Sigmoid colon (tissue), 7 donors: ENCODE measurements at regions of chrX and their contacts with region 1.

Region 1: GRCh38 chrX:48597353-48598264 is at the start of gene WDR13:
- DNase-seq: peak; percentile 95
- H3K4me3 ChIP-seq: peak within 1 kb of the TSS; percentile 51 to 71 (median 64)
- H3K27ac ChIP-seq: peak within 1 kb of the TSS; percentile 92 to 97 (median 94)
- H3K4me1 ChIP-seq: peaks cover 0 to 10% (median 6%) of the 10 kb centered on the region in 4 donors
- H3K27me3 ChIP-seq: no peaks in the 10 kb centered on the region
- CTCF ChIP-seq: no peak
- EP300 ChIP-seq: no peak
- POLR2A ChIP-seq: peak; percentile 15 to 46
- total RNA-seq, gene WDR13: 99.9 to 132 (median 106) TPM

Region 2: GRCh38 chrX:48574270-48575266 is 23.0 kb before region 1 on chrX and contains the start of gene RBM3:
- intact Hi-C with region 1: loop called (anchors 2 kb)
- DNase-seq: peak; percentile 97
- H3K4me3 ChIP-seq: peak within 1 kb of the TSS; percentile 54 to 76 (median 73)
- H3K27ac ChIP-seq: peak within 1 kb of the TSS; percentile 95 to 99 (median 96)
- H3K4me1 ChIP-seq: peaks cover 0 to 15% (median 14%) of the 10 kb centered on the region in 4 donors
- H3K27me3 ChIP-seq: no peaks in the 10 kb centered on the region
- CTCF ChIP-seq: peak in 3 of 4 experiments; percentile 26 to 29 (median 26)
- EP300 ChIP-seq: no peak
- POLR2A ChIP-seq: peak; percentile 88 to 93
- total RNA-seq, gene RBM3: 83.9 to 209 (median 143) TPM

Region 3: DNA sequence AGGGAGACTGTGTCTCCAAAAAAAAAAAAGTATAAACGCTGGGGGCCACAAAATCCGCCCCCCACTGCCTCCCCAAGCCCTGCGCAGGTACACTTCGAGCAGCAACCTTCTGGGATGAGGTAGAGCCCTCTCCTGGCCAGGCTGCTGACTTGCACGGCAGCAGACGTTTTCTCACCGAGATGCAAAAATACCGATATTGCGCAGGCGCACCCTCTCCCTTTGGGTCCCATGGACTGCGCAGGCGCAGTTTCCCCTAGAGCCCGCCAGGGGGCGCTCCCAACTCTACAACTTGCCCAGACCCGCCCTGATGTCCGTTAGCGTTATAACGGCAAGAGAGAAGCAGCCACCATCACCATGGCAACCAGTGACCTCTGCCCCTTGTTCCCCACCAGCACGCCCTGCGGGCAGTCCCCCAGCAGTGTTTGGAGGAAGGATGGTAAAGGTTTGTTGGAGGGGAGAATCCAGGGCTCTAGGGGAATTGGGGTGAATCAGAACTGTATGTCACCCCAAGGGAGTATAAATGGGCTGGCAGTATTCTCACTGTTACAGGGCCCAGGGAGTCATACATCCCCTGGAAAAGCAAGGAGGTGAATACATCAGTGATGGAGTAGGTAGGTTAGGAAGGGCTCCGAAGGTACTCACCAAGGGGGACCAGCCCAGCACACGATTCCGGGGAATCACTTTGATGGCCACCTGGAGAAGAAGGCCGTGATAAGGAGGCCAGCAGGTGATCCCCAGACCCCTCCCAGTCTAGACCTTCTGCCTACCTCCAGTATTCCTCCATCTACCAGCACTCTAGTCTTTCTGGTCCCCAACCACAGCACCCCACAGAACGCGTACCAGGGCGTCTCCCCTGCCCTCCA is 319.8 kb after region 1 on chrX:
- intact Hi-C with region 1: loop called (anchors 5 kb)
- DNase-seq: peak; percentile 95
- H3K4me3 ChIP-seq: peak overlapping the region in 2 of 4 donors; percentile 8 to 20
- H3K27ac ChIP-seq: peak overlapping the region; percentile 82 to 90 (median 86)
- H3K4me1 ChIP-seq: peaks cover 0 to 20% (median 8%) of the 10 kb centered on the region in 4 donors
- H3K27me3 ChIP-seq: no peaks in the 10 kb centered on the region
- CTCF ChIP-seq: peak; percentile 82 to 88 (median 84)
- EP300 ChIP-seq: no peak
- POLR2A ChIP-seq: no peak